Endothelial cell of umbilical vein (primary cell): ENCODE measurements at regions of chr5 and their contacts with region 1.

Region 1: GRCh38 chr5:16552666-16553343 is 64.0 kb downstream of the RETREG1 start:
- DNase-seq: peak; percentile 52
- H3K4me3 ChIP-seq: no peak overlapping the region
- H3K27ac ChIP-seq: no peak overlapping the region
- H3K4me1 ChIP-seq: no peaks in the 10 kb centered on the region
- H3K27me3 ChIP-seq: peaks cover 4 to 5% of the 10 kb centered on the region in 2 experiments
- CTCF ChIP-seq: peak; percentile 78 to 87
- POLR2A ChIP-seq: no peak

Region 2: GRCh38 chr5:16465544-16466466 is 87.0 kb before region 1 on chr5 and contains the start of gene ZNF622:
- CTCF ChIA-PET with region 1: interaction called, 5 read pairs
- POLR2A ChIA-PET with region 1: no interaction called
- dilution Hi-C with region 1: no loop called
- intact Hi-C with region 1: loop called (anchors 5 kb)
- DNase-seq: peak; percentile 79
- H3K4me3 ChIP-seq: peak within 1 kb of the TSS; percentile 47 to 82 (median 72)
- H3K27ac ChIP-seq: peak within 1 kb of the TSS; percentile 56
- H3K4me1 ChIP-seq: peaks cover 27% of the 10 kb centered on the region
- H3K27me3 ChIP-seq: no peaks in the 10 kb centered on the region
- CTCF ChIP-seq: no peak
- POLR2A ChIP-seq: peak; percentile 72
- total RNA-seq, gene ZNF622: 23.1 and 26.6 TPM in 2 replicates

Region 3: DNA sequence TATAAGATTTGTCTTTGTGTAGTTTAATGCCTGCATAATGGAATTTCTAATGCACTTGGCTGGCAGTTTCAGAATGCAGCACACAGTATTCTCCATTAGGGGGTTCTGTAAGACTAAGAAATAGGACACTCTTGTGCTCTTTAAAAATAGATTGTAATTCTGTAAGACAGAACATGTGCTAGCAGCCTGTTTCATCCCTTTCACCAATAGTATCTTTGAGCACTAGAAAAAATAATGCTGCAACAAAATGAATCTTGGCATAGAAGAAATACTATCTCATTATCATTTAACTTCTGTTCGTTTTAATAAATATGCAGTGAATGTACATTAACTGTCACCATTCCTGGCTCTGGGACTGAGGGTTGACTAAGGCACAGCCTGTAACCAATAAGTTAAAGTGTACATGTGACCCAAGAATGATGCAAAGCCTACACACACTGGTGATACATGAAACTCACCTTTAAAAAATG is 63.4 kb before region 1 on chr5:
- CTCF ChIA-PET with region 1: interaction called, 19 read pairs
- POLR2A ChIA-PET with region 1: no interaction called
- dilution Hi-C with region 1: no loop called
- intact Hi-C with region 1: loop called (anchors 1 kb)
- DNase-seq: peak; percentile 41
- H3K4me3 ChIP-seq: no peak overlapping the region
- H3K27ac ChIP-seq: no peak overlapping the region
- H3K4me1 ChIP-seq: no peaks in the 10 kb centered on the region
- H3K27me3 ChIP-seq: peaks cover 0 to 3% of the 10 kb centered on the region in 2 experiments
- CTCF ChIP-seq: peak; percentile 5 to 40
- POLR2A ChIP-seq: no peak

Region 4: GRCh38 chr5:16564248-16564867 is 11.6 kb after region 1 on chr5:
- CTCF ChIA-PET with region 1: interaction called, 17 read pairs
- POLR2A ChIA-PET with region 1: no interaction called
- dilution Hi-C with region 1: no loop called
- intact Hi-C with region 1: no loop called
- DNase-seq: no peak
- H3K4me3 ChIP-seq: no peak overlapping the region
- H3K27ac ChIP-seq: no peak overlapping the region
- H3K4me1 ChIP-seq: no peaks in the 10 kb centered on the region
- H3K27me3 ChIP-seq: peaks cover 0 to 2% of the 10 kb centered on the region in 2 experiments
- CTCF ChIP-seq: no peak
- POLR2A ChIP-seq: no peak

Region 5: GRCh38 chr5:18102733-18103132 is 1549.9 kb after region 1 on chr5:
- CTCF ChIA-PET with region 1: no interaction called
- POLR2A ChIA-PET with region 1: no interaction called
- dilution Hi-C with region 1: no loop called
- intact Hi-C with region 1: no loop called
- DNase-seq: no peak
- H3K4me3 ChIP-seq: no peak overlapping the region
- H3K27ac ChIP-seq: no peak overlapping the region
- H3K4me1 ChIP-seq: no peaks in the 10 kb centered on the region
- H3K27me3 ChIP-seq: no peaks in the 10 kb centered on the region
- CTCF ChIP-seq: no peak
- POLR2A ChIP-seq: no peak